Activated T-helper 1 cell treated with anti-CD3 and anti-CD28 coated beads, Interleukin-12 subunit alpha, Interleukin-12 subunit beta, Interleukin-2, Interleukin-4 antibody, amounts not matched to agents 30 ng/mL and 10 ng/mL and 1 ng/mL, durations not matched to agents 14 hours and 24 hours and 36 hours (primary cell): ENCODE measurements at regions of chr5 and their contacts with region 1.

Region 1: DNA sequence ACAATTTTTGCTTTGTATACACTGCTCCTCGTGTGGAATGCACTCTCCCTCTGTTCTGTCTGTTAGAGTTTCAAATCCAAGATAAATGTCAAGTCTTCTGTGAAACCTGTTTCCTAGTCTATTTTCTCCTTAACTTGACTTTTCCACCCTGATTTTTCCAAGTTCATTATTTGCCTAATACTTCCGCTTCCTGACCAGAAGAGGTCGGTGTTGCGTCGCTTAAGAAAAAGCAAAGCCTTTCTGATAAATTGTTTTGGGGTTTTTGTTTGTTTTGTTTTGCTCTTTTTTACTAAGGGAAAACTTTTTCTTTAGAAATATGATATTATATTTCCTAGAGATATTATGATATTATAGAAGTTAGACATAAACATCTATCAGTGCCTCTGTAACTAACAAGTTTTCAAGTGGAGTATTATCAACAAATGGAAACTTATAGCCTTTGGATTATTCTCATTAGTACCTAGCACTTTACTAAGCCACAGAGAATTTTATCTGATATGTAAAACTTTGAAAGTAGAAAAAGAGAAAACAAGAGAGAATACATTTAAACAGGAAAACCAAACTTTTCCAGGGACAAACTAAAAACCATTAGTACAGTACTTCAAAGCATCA is 55.8 kb downstream of the PHAX start:
- DNase-seq: no peak
- H3K4me3 Mint-ChIP-seq: no peak overlapping the region
- H3K27ac Mint-ChIP-seq: no peak overlapping the region
- H3K4me1 Mint-ChIP-seq: peaks cover 8% of the 10 kb centered on the region
- H3K27me3 Mint-ChIP-seq: peaks cover 10% of the 10 kb centered on the region

Region 2: GRCh38 chr5:127441799-127442484 is 785.4 kb after region 1 on chr5:
- intact Hi-C with region 1: loop called (anchors 2 kb)
- DNase-seq: no peak
- H3K4me3 Mint-ChIP-seq: no peak overlapping the region
- H3K27ac Mint-ChIP-seq: no peak overlapping the region
- H3K4me1 Mint-ChIP-seq: no peaks in the 10 kb centered on the region
- H3K27me3 Mint-ChIP-seq: no peaks in the 10 kb centered on the region

Region 3: DNA sequence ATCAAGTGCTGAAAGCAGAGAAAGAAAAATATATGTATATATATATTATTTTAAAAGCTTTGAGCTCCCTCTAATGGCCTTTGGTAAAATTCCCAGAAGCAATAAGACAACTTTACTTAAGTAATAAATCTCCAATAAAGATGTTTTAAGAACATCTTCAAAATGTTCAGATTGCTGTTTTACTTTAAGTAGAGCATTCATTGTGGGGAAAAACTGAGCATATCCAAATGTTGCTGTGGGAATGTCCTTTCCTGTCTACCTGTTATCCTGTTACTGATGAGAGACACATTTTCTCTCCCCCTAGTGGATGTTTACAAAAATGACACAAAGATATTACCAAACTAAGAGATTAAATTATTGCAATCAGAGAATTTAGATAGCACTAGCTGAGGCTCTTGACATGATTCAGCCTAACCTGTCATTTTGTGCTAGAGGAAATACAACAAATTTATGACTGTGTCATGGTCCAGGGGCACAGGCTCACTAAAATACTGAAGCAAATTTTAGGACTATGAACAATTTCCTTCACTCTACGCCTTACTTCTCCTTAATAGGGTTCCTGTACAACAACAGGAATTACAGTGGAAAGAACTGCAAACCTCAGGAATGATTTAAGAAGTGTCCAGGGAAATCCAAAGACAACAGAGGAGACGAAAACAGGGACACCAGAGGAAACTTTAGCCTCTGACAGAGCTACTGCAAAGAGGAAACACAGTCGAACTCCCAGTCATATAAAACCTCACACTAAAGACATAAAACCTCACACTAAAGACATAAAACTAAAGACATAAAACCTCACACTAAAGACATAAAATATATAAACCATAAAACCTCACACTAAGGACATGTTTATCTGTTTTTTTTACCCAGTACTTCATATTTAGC is 836.6 kb after region 1 on chr5:
- intact Hi-C with region 1: loop called (anchors 1 kb)
- DNase-seq: no peak
- H3K4me3 Mint-ChIP-seq: no peak overlapping the region
- H3K27ac Mint-ChIP-seq: no peak overlapping the region
- H3K4me1 Mint-ChIP-seq: no peaks in the 10 kb centered on the region
- H3K27me3 Mint-ChIP-seq: peaks cover 34% of the 10 kb centered on the region